Breast epithelium (tissue), 4 donors: ENCODE measurements at regions of chr6 and their contacts with region 1.

Region 1: GRCh38 chr6:44047179-44047546 is 80.1 kb downstream of the MRPL14 start:
- DNase-seq: no peak
- H3K4me3 ChIP-seq: no peak overlapping the region
- H3K27ac ChIP-seq: peak overlapping the region; percentile 84 to 91
- H3K4me1 ChIP-seq: peaks cover 25 to 51% of the 10 kb centered on the region in 2 donors
- H3K27me3 ChIP-seq: no peaks in the 10 kb centered on the region
- CTCF ChIP-seq: no peak
- POLR2A ChIP-seq: no peak

Region 2: DNA sequence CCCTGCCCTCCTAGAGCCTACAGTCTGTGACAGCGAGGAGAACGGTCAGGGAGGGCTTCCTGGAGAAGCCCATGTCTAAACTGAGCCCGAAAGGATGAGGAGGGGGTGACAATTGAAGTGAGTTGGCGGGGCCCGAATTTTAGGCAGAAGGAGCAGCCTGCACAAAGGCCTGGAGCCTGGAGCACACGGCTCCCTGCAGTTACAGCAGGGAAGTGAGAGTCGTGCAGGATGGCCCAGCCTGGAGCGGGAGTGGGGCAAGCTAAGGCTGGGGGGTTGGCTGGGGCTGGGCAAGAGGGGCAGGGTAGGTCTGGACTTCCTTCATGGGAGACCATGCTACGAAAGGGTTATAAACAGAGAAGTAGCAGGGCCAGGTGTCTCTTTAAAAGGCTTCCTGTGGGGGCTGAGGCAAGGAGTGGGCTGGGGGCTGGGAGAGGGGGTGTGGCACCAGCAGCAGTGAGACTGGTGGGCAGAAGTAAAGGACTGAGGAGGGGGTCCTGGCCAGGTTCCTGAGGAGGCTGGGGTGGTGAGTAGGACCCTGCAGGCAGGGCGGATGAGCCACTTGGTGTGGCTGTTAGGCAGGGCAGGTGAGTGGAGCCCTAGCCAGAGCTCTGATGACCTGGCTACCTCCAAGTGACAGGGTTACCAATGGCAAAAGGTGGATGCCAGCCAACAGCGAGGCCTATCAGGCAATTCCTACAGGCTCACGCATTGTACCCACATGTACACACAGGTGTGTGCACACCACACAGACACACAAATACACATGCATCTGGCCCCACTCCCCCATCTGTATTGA is 39.1 kb before region 1 on chr6:
- intact Hi-C with region 1: loop called (anchors 1 kb)
- DNase-seq: peak in 1 of 2 donors; percentile 24
- H3K4me3 ChIP-seq: no peak overlapping the region
- H3K27ac ChIP-seq: no peak overlapping the region
- H3K4me1 ChIP-seq: no peaks in the 10 kb centered on the region
- H3K27me3 ChIP-seq: no peaks in the 10 kb centered on the region
- CTCF ChIP-seq: no peak
- POLR2A ChIP-seq: no peak

Region 3: GRCh38 chr6:45116714-45117410 is 1069.7 kb after region 1 on chr6:
- intact Hi-C with region 1: no loop called
- DNase-seq: no peak
- H3K4me3 ChIP-seq: no peak overlapping the region
- H3K27ac ChIP-seq: no peak overlapping the region
- H3K4me1 ChIP-seq: no peaks in the 10 kb centered on the region
- H3K27me3 ChIP-seq: no peaks in the 10 kb centered on the region
- CTCF ChIP-seq: no peak
- POLR2A ChIP-seq: no peak